ENCODE measurements at regions of chr6 and their contacts with region 1.

Region 1: DNA sequence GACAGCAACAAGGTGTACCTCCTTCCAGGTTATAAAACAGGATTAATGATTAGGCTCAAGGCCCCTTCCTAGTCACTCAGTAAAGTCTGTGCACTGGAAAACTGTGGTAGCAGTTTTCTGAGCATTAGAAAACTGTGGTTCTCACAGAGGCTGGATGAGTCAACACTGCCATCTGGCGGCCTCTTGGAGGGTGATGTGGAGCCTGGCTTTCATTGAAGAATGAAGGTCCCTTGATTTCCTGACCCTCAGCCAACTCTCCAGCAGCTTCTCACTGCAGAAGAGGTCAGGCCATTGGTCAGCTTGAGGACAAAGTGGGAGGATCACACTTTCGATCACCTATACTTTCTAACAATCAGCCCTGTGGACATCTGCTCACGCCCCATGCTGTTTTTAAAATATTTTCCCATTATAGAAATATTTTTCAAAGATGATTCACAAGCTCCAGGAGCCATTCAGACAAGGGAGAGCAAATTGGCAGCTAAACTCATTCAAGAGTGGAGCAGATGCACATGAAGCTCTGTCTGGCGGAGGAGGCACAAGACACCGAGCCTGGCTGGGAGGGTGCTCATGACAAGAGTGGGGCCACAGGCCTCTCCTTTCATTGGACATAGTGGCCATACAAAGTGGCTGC is 23.2 kb downstream of the PSMB1 start:
- DNase-seq: peak; percentile 75 to 78
- ATAC-seq: peak; percentile 75 to 90 (median 84)
- H3K4me3 ChIP-seq: no peak overlapping the region
- H3K27ac ChIP-seq: no peak overlapping the region
- H3K4me1 ChIP-seq: peaks cover 0 to 11% (median 0%) of the 10 kb centered on the region in 9 donors
- H3K27me3 ChIP-seq: no peaks in the 10 kb centered on the region
- CTCF ChIP-seq: peak; percentile 82 to 93 (median 90)

Region 2: DNA sequence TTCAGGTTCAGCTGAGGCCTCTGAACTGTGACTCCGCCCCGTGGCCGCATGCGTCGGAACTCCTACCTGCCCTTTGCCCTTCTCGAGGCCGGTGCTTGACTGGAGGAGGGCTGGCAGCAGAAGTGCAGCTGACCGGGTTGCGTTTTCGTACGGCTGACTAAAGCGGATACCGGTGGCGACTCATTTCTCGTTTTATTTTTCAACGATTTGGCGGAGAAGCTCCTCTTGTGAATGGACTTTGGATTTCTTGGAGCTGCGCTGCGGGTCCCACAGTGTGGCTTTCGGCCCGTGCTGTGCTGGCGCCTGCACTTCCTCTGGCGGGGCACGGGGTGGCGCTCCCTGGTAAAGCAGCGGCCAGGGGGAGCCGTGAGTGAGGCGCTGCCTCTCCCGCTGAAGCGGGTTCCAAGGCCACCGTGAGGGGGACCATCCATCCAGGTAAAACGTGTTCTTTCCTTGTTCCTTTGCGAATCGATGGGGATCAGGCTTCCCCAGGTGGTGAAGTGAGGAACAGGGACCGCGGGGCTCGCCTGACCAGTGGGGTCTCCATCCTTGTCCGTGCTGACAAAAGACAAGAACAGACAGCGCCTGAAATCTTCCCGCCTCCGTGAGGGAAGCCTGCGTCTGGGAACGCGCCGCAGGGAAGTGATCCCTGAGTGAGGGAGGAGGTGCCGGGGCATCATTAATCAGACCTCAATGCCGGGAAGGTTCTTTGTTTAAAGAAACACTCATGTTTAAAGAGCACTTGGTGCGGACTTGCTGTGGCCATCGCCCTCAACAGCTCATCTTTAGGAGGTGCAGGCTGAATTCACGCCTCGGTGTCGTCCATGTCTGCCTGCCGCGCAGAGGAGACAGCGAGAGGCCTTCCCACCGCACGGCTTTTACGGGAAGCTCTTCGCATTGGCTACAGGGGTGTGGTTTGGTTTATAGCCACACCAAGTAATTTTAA is 739.7 kb before region 1 on chr6:
- intact Hi-C with region 1: loop called in 8 of 10 experiments (anchors 1 to 10 kb)
- DNase-seq: peak; percentile 55 to 70
- ATAC-seq: peak; percentile 93 to 98 (median 96)
- H3K4me3 ChIP-seq: peak overlapping the region in 9 of 10 donors; percentile 39 to 64 (median 57)
- H3K27ac ChIP-seq: peak overlapping the region in 6 of 10 donors; percentile 17 to 68 (median 43)
- H3K4me1 ChIP-seq: peaks cover 0 to 16% (median 10%) of the 10 kb centered on the region in 9 donors
- H3K27me3 ChIP-seq: peaks cover 0 to 24% (median 4%) of the 10 kb centered on the region in 7 donors
- CTCF ChIP-seq: peak; percentile 90 to 98 (median 96)

Region 3: DNA sequence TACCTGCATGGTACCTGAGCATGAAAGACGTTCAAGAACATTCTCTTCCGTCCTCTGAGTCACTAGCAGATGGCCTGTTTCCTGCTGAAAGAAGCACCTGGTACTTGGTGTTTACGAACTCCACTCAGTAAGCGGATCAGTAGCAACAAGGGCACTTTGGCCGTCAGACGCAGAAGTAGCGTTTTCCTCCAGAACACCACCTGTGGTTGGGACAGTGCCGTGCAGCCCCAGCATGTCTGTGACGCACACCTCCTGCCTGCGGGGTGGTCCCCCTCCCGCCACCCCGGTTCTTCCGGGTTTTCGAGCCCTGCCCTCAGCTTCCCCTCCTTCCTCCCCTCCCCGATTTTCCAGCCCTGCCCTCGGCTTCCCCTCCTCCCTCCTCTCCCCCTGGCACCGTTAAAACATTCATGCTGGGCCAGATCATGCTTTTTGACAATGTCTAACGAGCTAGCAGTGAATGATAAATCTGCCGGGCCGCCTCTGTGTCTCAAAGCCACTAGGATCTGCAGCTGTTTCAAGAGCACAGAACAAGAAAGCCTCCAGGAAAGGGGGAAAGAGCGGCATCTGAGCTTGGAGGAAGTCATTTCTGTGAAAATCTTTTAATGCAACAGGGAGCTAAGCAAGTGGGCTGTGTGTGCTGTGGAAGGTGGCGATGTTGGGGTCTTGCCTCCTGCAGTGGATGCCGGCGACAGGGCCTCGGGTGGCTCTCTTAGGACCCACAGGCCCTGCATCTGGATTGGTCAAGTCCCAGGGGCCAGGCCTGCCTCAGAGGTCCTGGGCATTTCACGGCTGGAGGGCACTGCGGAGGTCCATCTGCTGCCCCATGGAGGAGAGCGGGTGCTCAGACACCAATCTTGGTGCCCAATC is 570.6 kb before region 1 on chr6:
- intact Hi-C with region 1: loop called in 3 of 10 experiments (anchors 10 kb)
- DNase-seq: peak in 1 of 2 donors; percentile 14
- ATAC-seq: peak in 5 of 8 donors; percentile 30 to 56 (median 49)
- H3K4me3 ChIP-seq: peak overlapping the region in 2 of 10 donors; percentile 8 to 21
- H3K27ac ChIP-seq: no peak overlapping the region
- H3K4me1 ChIP-seq: peaks cover 0 to 29% (median 9%) of the 10 kb centered on the region in 9 donors
- H3K27me3 ChIP-seq: peaks cover 0 to 31% (median 17%) of the 10 kb centered on the region in 7 donors
- CTCF ChIP-seq: no peak

Region 4: GRCh38 chr6:170306324-170307079 is 223.5 kb before region 1 on chr6 and contains the start of gene FAM120B:
- intact Hi-C with region 1: loop called in 4 of 10 experiments (anchors 10 kb)
- DNase-seq: peak; percentile 97 to 98
- ATAC-seq: peak; percentile 98 to 99 (median 99)
- H3K4me3 ChIP-seq: peak within 1 kb of the TSS; percentile 59 to 98 (median 86)
- H3K27ac ChIP-seq: peak within 1 kb of the TSS; percentile 44 to 97 (median 93)
- H3K4me1 ChIP-seq: peaks cover 14 to 56% (median 46%) of the 10 kb centered on the region in 9 donors
- H3K27me3 ChIP-seq: no peaks in the 10 kb centered on the region
- CTCF ChIP-seq: no peak
- total RNA-seq, gene FAM120B: 16.0 to 31.0 (median 25.4) TPM

Region 5: GRCh38 chr6:170316071-170316470 is 213.9 kb before region 1 on chr6:
- intact Hi-C with region 1: loop called in 2 of 10 experiments (anchors 10 kb)
- DNase-seq: no peak
- ATAC-seq: no peak
- H3K4me3 ChIP-seq: no peak overlapping the region
- H3K27ac ChIP-seq: peak overlapping the region in 1 of 10 donors; percentile 54
- H3K4me1 ChIP-seq: peaks cover 2 to 51% (median 35%) of the 10 kb centered on the region in 9 donors
- H3K27me3 ChIP-seq: no peaks in the 10 kb centered on the region
- CTCF ChIP-seq: no peak

Measured in heart right ventricle (tissue), 16 donors.